SK-N-SH (cell line): ENCODE measurements at regions of chr4 and their contacts with region 1.

Region 1: DNA sequence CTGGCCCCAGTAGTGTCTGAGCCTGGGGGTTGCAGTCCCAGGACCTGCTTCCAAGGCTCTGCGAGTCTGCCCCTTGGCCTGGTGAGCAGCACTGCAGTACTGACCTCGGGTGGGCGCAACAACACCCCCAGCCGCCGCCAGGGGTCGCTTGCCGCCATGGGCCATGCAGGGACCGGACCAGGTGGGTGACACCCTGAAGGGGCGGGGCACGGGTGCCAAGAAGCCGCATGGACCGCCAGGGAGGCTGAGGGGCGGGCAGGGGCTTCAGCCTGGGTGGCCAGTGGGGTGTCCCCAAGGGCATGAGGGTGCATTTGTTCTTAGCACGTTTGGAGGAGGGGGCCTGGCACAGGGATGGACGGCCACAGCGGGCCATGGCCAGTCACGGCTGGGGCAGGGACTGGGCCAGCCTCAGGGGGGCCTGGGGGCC is 25.0 kb downstream of the TACC3 start:
- DNase-seq: peak; percentile 96
- H3K4me3 ChIP-seq: no peak overlapping the region; a peak in 1 of 4 replicates
- H3K27ac ChIP-seq: no peak overlapping the region
- H3K4me1 ChIP-seq: peaks cover 0 to 7% of the 10 kb centered on the region in 2 experiments; a peak in 1 of 4 replicates
- H3K27me3 ChIP-seq: no peaks in the 10 kb centered on the region
- CTCF ChIP-seq: peak; percentile 79
- EP300 ChIP-seq: no peak
- RAD21 ChIP-seq: peak; percentile 69

Region 2: DNA sequence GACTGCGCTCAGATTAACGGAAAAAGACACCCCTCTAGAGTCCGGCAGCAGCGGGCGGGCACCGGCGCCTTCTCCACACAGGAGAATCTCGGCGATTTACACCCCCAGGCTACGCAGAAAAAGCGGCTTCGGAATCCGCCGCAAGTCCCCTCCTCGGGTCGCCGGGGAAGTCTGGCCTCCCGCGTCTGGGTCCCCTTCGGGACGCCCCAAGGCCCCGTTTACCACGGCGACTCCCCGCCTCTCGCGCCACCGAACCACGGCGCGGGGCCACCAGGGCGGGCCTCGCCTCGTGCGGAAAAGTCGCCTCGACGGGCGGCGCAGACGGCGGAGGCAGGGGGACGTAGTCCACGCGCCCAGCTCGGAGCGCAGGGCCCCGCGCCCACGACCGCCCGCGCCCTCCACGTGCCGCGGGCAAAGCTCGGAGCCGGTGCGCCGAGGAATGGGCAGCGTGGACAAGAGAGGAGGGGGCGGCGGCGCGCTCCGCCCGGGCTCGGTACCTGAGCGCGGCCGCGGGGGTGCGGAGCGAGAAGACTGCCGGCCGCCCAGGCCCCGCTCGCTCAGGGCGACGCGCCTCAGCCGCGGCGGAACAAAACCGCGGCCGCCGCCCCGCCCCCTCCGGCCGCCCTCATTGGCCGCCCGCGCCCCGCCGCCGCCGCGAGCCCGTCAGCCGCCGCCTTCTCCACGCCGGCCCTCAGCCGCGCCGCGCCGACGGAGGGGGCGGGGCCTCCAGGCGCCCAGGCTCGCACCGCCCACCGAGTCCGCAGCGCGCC is 62.4 kb before region 1 on chr4 and contains the start of gene FAM53A:
- CTCF ChIA-PET with region 1: no interaction called
- POLR2A ChIA-PET with region 1: no interaction called
- DNase-seq: peak; percentile 99
- H3K4me3 ChIP-seq: peak within 1 kb of the TSS; percentile 65 to 67
- H3K27ac ChIP-seq: peak within 1 kb of the TSS; percentile 61 to 94
- H3K4me1 ChIP-seq: peaks cover 4 to 13% of the 10 kb centered on the region in 2 experiments; a peak in 2 of 4 replicates
- H3K27me3 ChIP-seq: no peaks in the 10 kb centered on the region
- CTCF ChIP-seq: no peak
- EP300 ChIP-seq: no peak
- RAD21 ChIP-seq: no peak
- polyA plus RNA-seq, gene FAM53A: 7.6 and 8.3 TPM in 2 replicates

Region 3: DNA sequence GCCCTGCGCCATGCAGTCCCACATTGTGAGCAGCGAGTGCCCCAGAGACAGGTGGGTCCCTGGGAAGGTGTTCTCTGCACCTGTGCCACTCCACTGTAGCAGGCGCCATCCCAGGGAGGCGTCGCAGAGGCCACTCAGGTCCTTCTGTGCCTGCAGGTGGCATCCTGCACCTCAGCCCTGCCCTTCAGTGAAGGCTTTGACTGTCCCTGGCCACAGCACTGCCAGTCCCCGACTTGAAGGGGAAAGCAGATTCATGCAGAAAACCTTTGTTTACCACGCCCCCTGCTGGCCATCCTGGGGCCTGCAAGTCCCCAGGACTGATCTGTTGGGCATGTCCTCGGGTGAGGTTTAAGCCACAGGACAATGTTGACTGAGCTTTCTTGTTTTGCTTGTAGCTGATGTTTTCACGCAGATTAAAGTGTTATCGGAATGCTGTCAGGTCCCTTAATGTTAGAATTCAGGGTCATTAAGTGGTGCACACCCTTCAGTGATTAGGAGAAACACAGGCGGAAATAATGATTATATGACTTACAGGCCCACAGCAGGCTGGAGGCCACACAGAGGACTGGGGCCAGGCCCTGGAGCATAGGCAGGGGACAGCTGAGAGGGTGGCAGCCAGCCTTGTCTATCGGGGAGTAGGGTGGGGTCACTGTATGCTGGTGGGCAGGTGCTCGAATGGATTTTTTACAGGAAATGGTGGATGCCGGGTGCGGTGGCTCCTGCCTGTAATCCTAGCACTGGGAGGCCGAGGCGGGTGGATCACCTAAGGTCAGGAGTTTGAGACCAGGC is 19.9 kb before region 1 on chr4:
- CTCF ChIA-PET with region 1: interaction called, 11 read pairs
- POLR2A ChIA-PET with region 1: interaction called, 3 read pairs
- DNase-seq: peak; percentile 89
- H3K4me3 ChIP-seq: peak overlapping the region in 1 of 2 experiments; percentile 22; a peak in 1 of 4 replicates
- H3K27ac ChIP-seq: peak overlapping the region; percentile 73 to 82
- H3K4me1 ChIP-seq: peaks cover 26 to 28% of the 10 kb centered on the region in 2 experiments; a peak in 3 of 4 replicates
- H3K27me3 ChIP-seq: no peaks in the 10 kb centered on the region
- CTCF ChIP-seq: peak; percentile 97
- EP300 ChIP-seq: no peak
- RAD21 ChIP-seq: peak; percentile 82

Region 4: GRCh38 chr4:1759818-1760223 is 13.5 kb after region 1 on chr4:
- CTCF ChIA-PET with region 1: interaction called, 19 read pairs
- POLR2A ChIA-PET with region 1: interaction called, 5 read pairs
- DNase-seq: no peak
- H3K4me3 ChIP-seq: no peak overlapping the region
- H3K27ac ChIP-seq: no peak overlapping the region
- H3K4me1 ChIP-seq: peaks cover 0 to 16% of the 10 kb centered on the region in 2 experiments; a peak in 1 of 4 replicates
- H3K27me3 ChIP-seq: no peaks in the 10 kb centered on the region
- CTCF ChIP-seq: no peak
- EP300 ChIP-seq: no peak
- RAD21 ChIP-seq: no peak

Region 5: DNA sequence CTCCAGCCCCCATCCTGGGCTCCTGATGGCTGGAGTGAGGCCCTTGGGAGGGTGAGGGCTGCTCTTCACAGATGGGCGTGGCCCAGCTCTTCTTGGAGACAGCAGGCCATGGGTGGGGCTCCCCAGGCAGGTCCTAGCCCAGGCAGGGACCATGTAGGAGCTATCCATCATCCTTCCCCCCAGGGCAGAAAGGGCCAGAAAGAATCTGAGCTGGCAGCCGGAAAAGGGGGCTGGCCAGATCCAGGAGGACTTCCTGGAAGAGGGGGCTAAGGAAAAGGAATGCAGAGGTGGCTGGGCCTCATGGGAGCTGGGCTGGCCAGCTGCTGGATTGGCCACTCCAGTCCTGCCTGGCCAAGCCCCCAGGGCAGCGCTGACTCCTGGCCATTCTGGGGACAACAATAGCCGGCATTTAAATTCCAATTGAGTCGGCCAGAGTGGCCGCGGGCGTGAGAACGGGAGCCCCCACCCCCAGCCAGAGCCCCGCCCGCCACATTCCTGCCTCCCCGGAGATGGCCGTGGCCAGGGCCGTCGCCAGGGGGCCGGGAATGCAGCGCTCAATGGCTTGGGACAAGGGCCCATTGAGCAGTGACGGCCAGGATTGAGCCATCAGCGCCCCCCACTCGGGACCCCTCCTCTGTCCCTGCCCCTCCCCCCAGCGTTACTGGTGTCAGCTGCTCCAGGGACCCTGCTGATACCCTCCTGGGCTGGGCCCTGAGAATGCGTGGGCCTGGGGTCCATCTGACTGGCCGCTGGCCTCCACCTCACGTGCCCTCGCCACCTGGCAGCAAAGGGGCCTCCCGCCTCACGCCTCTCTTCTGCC is 31.8 kb after region 1 on chr4:
- CTCF ChIA-PET with region 1: interaction called, 14 read pairs
- POLR2A ChIA-PET with region 1: no interaction called
- DNase-seq: no peak
- H3K4me3 ChIP-seq: no peak overlapping the region
- H3K27ac ChIP-seq: no peak overlapping the region
- H3K4me1 ChIP-seq: peaks cover 0 to 27% of the 10 kb centered on the region in 2 experiments; a peak in 1 of 4 replicates
- H3K27me3 ChIP-seq: no peaks in the 10 kb centered on the region
- CTCF ChIP-seq: no peak
- EP300 ChIP-seq: no peak
- RAD21 ChIP-seq: no peak

Region 6: DNA sequence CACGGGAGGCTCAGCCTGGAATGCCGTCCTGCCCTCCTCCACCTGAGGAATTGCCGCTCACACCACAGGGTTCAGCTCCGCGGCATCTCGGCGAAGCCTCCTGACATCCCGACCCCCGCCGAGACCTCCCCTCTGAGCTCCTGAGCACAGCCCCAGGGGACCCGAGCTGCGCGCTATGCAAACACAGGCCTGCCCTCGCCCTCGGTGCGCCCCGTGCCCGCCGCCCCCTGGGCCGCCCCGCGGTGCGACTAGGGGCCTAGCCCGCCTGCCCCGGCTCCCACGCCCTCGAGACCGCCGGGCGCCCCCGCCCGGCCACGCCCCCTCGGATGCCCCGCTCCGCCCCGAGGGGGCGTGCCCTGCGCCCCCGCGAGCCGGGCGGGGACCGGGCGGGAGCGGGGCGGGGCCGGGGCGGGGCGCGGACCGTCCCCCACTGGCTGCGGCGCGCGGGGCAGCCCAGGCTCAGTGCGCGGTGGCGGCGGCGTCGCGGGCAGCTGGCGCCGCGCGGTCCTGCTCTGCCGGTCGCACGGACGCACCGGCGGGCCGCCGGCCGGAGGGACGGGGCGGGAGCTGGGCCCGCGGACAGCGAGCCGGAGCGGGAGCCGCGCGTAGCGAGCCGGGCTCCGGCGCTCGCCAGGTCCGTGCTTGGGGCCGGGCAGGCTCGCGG is 46.7 kb after region 1 on chr4 and contains the start of gene FGFR3:
- CTCF ChIA-PET with region 1: interaction called, 43 read pairs
- POLR2A ChIA-PET with region 1: no interaction called
- DNase-seq: peak; percentile 99
- H3K4me3 ChIP-seq: peak within 1 kb of the TSS; percentile 39 to 45; a peak in 3 of 4 replicates
- H3K27ac ChIP-seq: no peak within 1 kb of the TSS
- H3K4me1 ChIP-seq: peaks cover 0 to 3% of the 10 kb centered on the region in 2 experiments; a peak in 1 of 4 replicates
- H3K27me3 ChIP-seq: peaks cover 12% of the 10 kb centered on the region
- CTCF ChIP-seq: no peak
- EP300 ChIP-seq: no peak
- RAD21 ChIP-seq: no peak
- polyA plus RNA-seq, gene FGFR3: 0.62 and 1.1 TPM in 2 replicates

Region 7: DNA sequence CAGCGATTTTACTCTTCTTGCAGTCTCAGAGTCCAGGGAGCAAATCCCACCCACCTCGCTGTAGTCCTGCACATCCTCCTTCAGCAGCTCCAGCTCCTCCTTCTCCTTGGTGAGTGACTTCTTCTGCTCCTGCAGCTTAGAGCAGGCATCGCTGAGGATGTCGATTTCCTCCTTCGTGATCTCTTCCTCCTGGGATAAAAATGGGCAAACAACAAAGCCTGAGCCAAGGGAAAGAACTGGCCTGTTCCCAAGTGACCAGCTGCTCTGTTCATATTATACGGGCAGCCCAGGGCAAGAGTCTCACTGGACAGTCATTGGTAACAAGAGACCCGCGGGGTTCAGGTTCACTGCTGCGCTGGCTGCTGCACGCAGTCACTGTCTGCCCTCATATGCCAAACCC is 73.0 kb after region 1 on chr4:
- CTCF ChIA-PET with region 1: interaction called, 166 read pairs
- POLR2A ChIA-PET with region 1: no interaction called
- DNase-seq: peak; percentile 29
- H3K4me3 ChIP-seq: no peak overlapping the region
- H3K27ac ChIP-seq: peak overlapping the region in 1 of 2 experiments; percentile 43; a peak in 2 of 4 replicates
- H3K4me1 ChIP-seq: peaks cover 0 to 12% of the 10 kb centered on the region in 2 experiments; a peak in 1 of 4 replicates
- H3K27me3 ChIP-seq: no peaks in the 10 kb centered on the region
- CTCF ChIP-seq: no peak
- EP300 ChIP-seq: no peak
- RAD21 ChIP-seq: no peak

Region 8: GRCh38 chr4:1910643-1911042 is 164.4 kb after region 1 on chr4:
- CTCF ChIA-PET with region 1: interaction called, 20 read pairs
- POLR2A ChIA-PET with region 1: no interaction called
- DNase-seq: peak; percentile 61
- H3K4me3 ChIP-seq: no peak overlapping the region
- H3K27ac ChIP-seq: peak overlapping the region in 1 of 2 experiments; percentile 10; a peak in 1 of 4 replicates
- H3K4me1 ChIP-seq: no peaks in the 10 kb centered on the region; a peak in 2 of 4 replicates
- H3K27me3 ChIP-seq: no peaks in the 10 kb centered on the region
- CTCF ChIP-seq: peak; percentile 67
- EP300 ChIP-seq: no peak
- RAD21 ChIP-seq: peak; percentile 76